GM10248 (cell line): ENCODE measurements at regions of chr2 and their contacts with region 1.

Region 1: DNA sequence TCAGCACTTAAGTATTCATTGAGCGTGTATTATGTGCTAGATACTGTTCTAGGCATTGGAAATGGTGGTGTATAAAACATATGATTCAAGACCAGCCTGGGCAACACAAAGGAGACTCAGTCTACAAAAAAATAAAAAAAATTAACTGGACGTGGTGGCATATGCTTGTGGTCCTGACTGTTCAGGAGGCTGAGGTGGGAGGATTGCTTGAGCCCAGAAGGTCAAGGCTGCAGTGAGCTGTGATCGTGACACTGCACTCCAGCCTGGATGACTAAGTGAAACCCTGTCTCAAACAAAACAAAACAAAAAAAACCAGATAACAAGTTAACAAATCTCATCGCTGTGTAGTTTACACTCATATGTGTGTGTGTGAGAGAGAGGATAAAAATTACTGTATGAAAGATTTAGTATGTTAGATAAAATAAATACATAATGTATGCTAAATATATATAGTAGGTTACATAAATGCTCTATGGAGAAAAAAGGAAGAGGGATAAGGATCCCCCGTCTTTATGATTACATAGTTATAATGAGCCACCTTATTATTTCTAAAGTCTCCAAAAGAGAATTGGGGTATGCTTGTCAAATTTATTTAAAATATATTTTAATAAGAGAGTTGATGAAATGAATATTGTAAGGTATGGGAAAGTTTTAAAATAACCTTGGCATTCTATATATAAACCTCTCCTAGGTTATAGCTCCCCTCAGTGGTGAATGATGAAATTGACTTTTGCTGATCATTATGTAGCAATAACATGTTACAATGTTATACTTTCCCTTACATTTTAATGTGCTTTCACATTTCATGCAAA is 69.2 kb downstream of the EHBP1 start:
- DNase-seq: peak; percentile 28
- CTCF ChIP-seq: peak; percentile 55

Region 2: DNA sequence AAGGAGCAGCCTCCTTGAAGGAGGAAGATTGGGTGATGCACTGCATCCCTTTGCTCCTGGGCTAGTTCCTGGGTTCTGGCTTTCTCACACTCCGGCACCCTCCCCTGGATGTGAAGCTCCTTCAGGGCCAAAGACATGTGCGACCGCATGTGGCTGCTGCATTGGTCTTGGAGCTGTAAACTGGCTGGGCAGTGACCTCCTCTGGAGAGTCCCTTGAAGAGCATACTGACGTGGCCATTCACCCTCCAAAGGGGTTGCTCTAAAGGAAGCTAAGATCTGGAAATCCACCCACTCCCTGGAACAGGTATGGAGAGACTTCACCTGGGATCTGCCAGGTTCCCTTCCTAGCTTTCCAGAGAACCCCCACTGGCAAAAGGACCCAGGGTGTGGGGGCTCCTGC is 330.9 kb before region 1 on chr2:
- CTCF ChIA-PET with region 1: interaction called, 10 read pairs
- POLR2A ChIA-PET with region 1: no interaction called
- DNase-seq: no peak
- CTCF ChIP-seq: no peak

Region 3: DNA sequence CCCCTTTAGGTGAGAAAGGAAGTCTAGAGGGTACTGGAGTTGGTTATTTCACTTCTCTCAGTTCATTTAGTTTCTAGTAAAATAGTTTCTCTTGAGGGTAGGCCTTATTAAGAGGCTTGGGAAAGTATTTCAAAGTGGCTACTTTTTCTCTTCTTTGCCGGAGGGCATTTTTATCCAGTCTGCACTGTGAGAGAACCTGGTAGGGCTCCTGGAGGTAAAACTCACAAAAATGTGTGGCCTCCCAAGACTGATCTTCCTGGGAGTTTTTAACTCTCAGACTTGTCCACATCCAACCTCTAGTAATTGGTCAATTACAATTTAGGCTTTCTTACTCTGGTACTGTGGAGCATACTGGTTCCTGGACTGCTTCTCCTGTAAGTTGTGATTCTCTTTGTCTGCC is 41.2 kb before region 1 on chr2:
- CTCF ChIA-PET with region 1: no interaction called
- POLR2A ChIA-PET with region 1: no interaction called
- DNase-seq: no peak
- CTCF ChIP-seq: no peak

Region 4: DNA sequence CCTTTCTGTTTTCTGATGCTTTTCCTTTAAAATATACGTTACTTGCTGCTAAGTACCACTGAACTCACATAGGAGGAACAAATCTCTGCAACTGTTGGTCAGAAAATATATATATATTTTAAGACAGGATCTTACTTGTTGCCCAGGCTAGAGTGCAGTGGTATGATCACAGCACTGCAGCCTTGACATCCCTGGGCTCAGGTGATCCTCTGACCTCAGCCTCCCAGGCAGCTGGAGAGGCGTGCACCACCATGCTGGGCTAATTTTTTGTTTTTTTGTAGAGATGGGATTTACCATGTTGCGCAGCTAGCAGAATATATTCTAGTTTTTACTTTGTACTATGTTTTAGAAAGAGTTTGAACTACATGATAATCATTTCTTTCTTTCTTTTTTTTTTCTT is 17.7 kb before region 1 on chr2:
- CTCF ChIA-PET with region 1: interaction called, 15 read pairs
- POLR2A ChIA-PET with region 1: no interaction called
- DNase-seq: no peak
- CTCF ChIP-seq: no peak

Region 5: GRCh38 chr2:62787386-62787785 is 12.6 kb after region 1 on chr2:
- CTCF ChIA-PET with region 1: interaction called, 15 read pairs
- POLR2A ChIA-PET with region 1: no interaction called
- DNase-seq: peak; percentile 22
- CTCF ChIP-seq: peak; percentile 49

Region 6: DNA sequence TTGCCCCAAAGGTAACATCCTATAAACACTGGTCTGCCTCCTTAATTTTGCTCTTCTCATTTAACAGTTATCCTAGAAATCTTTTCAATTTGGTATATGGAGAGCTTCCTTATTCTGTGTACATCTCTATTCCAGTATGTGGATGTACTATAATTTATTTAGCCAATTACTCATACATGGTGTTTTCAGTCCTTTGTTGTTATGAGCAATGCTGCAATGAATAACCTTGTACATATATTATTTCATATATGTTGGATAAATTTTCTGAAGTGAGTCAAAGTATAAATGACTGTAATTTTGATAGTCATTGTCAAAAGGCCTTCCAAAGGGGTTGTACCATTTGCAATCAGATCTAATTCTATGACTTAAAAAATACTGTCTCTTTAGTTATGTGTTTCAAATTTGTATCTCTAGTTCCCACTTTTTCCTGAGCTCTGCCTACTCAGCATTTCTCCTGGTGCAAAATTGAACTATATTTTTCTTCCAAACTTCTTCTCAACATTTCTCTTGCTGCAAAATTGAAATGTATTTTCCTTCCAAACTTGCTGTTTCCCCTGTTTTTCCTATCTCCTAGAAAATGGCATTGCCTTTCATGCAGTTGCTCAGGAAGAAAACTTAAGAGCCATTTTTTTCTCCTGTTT is 122.5 kb after region 1 on chr2:
- CTCF ChIA-PET with region 1: no interaction called
- POLR2A ChIA-PET with region 1: no interaction called
- DNase-seq: no peak
- CTCF ChIP-seq: no peak